Right lobe of liver (tissue), 6 donors: ENCODE measurements at regions of chr1 and their contacts with region 1.

Region 1: GRCh38 chr1:163071405-163072255 is 2.5 kb downstream of the RGS4 start:
- DNase-seq: peak in 2 of 3 donors; percentile 41 to 55
- ATAC-seq: peak; percentile 88 to 93 (median 90)
- H3K4me3 ChIP-seq: no peak overlapping the region
- H3K27ac ChIP-seq: no peak overlapping the region
- H3K4me1 ChIP-seq: no peaks in the 10 kb centered on the region
- H3K27me3 ChIP-seq: peaks cover 5 to 11% of the 10 kb centered on the region in 2 donors
- CTCF ChIP-seq: peak; percentile 58 to 69 (median 61)
- POLR2A ChIP-seq: no peak

Region 2: GRCh38 chr1:163174524-163175437 is 103.2 kb after region 1 on chr1:
- intact Hi-C with region 1: no loop called
- DNase-seq: peak; percentile 57 to 62 (median 58)
- ATAC-seq: peak; percentile 75 to 84 (median 80)
- H3K4me3 ChIP-seq: no peak overlapping the region
- H3K27ac ChIP-seq: no peak overlapping the region
- H3K4me1 ChIP-seq: no peaks in the 10 kb centered on the region
- H3K27me3 ChIP-seq: no peaks in the 10 kb centered on the region
- CTCF ChIP-seq: peak; percentile 79 to 88 (median 84)
- POLR2A ChIP-seq: no peak

Region 3: GRCh38 chr1:163315773-163316374 is 244.2 kb after region 1 on chr1:
- intact Hi-C with region 1: loop called in 1 of 2 experiments (anchors 10 kb)
- DNase-seq: no peak
- ATAC-seq: peak in 2 of 4 donors; percentile 52 to 62
- H3K4me3 ChIP-seq: no peak overlapping the region
- H3K27ac ChIP-seq: no peak overlapping the region
- H3K4me1 ChIP-seq: no peaks in the 10 kb centered on the region
- H3K27me3 ChIP-seq: no peaks in the 10 kb centered on the region
- CTCF ChIP-seq: peak; percentile 66 to 76 (median 72)
- POLR2A ChIP-seq: no peak